Left ventricle myocardium inferior (tissue), 1 donor: ENCODE measurements at regions of chr20 and their contacts with region 1.

Region 1: DNA sequence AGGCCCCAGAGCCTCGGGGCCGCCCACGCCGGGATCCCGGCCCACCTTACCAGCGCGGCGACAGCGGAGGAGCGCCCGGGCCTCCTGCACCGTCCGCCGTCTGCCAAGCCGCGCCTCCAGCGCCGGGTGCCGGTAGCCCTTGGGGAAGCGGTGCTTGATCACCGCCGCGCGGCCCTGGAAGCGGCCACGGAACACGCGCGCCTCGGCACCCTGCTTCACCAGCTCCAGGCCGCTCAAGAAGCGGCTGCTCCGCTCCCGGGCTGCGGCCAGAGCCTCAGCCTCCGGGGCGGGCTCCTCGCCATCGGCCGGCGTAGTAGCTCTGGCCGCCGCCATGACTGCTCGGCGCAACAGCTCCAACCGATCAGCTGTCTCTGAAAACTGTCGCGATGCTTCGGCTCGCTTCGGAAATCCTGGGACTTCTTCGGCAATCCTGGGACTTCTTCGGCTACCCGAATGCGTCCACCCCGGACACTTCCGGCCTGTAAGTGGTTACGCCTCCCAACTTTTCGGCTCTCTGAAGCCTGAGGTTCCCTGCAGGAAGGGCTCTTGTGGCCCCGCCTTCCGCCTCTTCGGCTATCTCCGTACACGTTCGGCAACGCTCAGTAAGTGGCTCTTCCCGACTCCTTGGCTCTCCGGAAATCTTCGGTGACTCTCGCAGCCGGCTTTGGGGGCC is at the start of gene TP53RK:
- DNase-seq: peak; percentile 99
- H3K4me3 ChIP-seq: peak within 1 kb of the TSS; percentile 91
- H3K27ac ChIP-seq: peak within 1 kb of the TSS; percentile 96
- H3K4me1 ChIP-seq: peaks cover 42% of the 10 kb centered on the region
- H3K27me3 ChIP-seq: no peaks in the 10 kb centered on the region
- CTCF ChIP-seq: peak; percentile 66
- total RNA-seq, gene TP53RK: 6.0 TPM

Region 2: DNA sequence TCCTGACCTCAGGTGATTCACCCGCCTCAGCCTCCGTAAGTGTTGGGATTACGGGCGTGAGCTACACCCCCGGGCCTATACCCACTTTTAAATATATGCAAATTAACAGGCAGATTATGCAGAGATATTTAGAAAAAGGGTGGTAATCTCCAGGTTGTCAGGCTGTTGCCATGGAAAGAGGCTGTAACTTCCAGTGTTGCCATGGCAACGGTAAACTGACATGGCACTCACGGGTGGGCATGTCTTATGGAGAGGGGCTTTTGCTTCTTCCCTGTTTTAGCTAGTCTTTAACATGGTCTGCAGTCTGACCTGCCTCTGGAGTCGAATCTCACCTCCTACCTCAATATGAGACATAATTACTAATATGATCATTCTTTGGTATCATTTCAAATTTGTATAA is 220.7 kb before region 1 on chr20:
- intact Hi-C with region 1: no loop called
- DNase-seq: no peak
- H3K4me3 ChIP-seq: no peak overlapping the region
- H3K27ac ChIP-seq: no peak overlapping the region
- H3K4me1 ChIP-seq: no peaks in the 10 kb centered on the region
- H3K27me3 ChIP-seq: peaks cover 14% of the 10 kb centered on the region
- CTCF ChIP-seq: no peak

Region 3: DNA sequence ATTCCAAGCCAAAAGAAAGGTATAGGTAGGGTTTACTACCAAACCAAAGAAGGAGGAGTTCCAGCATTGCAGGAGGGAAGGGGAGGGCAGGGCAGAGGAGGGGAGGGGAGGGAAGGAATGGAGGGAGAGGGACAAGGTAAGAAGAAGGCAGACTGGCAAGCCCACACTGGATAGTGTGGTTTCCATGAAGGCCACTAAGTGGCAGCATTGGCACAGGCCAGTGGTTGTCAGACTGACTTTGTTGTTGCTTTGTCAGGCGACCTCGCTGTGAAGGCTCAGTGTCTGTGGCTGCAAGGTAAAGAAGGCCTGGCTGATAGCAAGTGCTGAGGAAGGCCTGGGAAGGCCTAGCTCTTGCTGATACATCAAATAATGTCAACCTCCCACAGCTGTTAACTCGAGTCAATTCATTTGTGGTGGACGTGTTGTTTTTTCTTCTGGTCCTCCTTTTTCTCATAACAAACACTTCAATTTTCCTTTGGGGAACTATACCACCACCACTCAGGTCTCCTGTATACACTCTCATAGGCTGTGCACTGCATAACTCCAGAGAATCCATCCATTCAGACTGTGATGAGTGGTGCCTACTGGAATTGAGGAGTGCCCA is 168.1 kb before region 1 on chr20:
- intact Hi-C with region 1: loop called (anchors 10 kb)
- DNase-seq: no peak
- H3K4me3 ChIP-seq: no peak overlapping the region
- H3K27ac ChIP-seq: no peak overlapping the region
- H3K4me1 ChIP-seq: no peaks in the 10 kb centered on the region
- H3K27me3 ChIP-seq: peaks cover 61% of the 10 kb centered on the region
- CTCF ChIP-seq: peak; percentile 59

Region 4: DNA sequence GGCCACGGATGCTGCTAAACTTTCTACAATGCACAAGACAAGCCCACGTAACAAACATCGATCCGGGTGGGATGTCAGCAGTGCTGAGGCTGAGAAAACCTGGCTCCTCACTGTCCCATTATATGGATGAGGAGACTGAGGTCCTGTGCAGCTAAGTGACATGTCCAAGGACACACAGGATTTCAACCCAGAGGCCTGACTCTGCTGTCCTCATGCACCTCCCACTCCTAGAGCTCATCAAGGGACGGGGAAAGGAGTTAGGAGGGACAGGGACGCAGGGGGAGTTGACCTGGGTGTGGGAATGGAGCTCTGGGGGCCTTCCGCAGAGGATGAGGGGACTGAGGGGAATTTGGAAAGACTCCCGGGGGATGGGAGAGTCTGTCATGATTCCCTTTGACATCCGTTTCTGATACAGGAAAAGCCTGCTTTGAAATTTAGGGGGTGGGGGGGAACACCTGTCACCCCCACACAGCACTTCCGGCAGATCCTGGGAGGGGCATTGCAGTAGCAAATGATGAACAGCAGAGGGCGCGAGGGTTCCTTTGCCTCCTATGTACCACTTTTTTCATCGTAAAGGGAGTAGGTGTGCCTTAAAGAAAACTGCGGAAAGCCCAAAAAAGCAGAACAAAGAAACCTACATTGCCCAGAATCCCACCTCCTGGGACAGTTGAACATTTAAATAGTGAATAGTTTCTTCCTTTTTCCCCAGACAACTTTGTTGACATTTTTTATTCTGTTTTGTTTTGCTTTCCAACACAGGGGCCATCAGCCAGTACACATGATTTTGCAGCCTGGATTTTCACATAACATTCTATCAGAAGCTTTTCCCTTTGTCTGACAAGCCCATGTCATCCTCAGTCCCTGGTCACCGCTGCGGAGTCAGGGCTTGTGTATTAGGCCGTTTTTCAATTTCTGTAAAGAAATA is 68.8 kb after region 1 on chr20:
- intact Hi-C with region 1: no loop called
- DNase-seq: peak; percentile 30
- H3K4me3 ChIP-seq: no peak overlapping the region
- H3K27ac ChIP-seq: no peak overlapping the region
- H3K4me1 ChIP-seq: peaks cover 4% of the 10 kb centered on the region
- H3K27me3 ChIP-seq: peaks cover 28% of the 10 kb centered on the region
- CTCF ChIP-seq: peak; percentile 94